Sigmoid colon (tissue), 7 donors: ENCODE measurements at regions of chr15 and their contacts with region 1.

Region 1: DNA sequence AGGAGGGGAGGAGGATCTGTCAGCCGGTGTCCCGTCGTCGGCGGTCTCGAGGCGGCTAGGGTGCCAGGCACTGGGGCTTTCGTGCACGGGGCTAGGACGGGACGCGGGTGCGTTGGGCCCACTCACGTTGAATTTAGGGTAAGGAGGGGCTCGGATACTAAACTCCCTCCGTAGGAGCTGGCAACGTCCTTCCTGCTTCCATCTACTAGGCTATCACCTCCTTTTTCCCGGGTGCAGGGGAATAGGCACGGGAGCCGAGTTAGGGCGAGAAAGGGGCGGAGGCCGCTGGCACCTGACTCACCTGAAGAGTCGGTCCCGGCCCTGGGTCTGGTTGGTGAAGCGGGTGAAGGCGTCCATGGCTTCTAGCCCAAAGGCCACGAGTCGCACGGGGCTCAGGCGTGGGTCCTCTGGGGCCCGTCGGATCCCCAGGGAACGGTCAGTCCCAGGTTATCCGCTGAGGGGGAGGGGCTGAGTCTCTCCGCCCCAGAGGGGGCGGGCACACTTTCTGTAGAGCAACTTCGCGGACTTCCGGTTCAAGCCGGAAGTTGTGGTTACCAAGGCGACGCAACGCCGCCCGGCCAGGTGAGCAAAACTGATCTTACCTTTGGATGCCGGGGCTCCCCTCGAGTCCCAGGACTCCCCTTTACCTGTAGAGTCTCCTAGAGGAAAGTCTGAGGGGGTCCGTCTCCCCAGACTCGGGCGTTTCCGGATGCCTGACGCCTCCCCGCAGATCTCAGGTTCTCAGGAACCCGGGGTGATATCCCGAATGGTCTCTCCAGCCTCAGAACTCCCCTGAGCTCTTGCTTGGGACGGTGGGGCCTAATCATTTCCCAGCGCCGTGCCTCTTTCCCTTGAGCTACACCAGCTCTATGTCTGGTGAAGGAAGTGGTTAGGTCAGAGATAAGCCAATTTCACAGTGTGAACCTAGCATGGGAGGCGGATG is at the starts of genes PEX11A and WDR93:
- DNase-seq: peak; percentile 89
- H3K4me3 ChIP-seq: peak within 1 kb of the TSS; percentile 72 to 91 (median 86)
- H3K27ac ChIP-seq: peak within 1 kb of the TSS; percentile 61 to 71 (median 68)
- H3K4me1 ChIP-seq: peaks cover 0 to 18% (median 10%) of the 10 kb centered on the region in 4 donors
- H3K27me3 ChIP-seq: no peaks in the 10 kb centered on the region
- CTCF ChIP-seq: no peak
- EP300 ChIP-seq: no peak
- POLR2A ChIP-seq: peak in 1 of 2 donors; percentile 64
- total RNA-seq, gene PEX11A: 11.1 to 16.5 (median 13.3) TPM
- total RNA-seq, gene WDR93: 1.1 TPM in 1 of 4 donors, not detected in the others

Region 2: DNA sequence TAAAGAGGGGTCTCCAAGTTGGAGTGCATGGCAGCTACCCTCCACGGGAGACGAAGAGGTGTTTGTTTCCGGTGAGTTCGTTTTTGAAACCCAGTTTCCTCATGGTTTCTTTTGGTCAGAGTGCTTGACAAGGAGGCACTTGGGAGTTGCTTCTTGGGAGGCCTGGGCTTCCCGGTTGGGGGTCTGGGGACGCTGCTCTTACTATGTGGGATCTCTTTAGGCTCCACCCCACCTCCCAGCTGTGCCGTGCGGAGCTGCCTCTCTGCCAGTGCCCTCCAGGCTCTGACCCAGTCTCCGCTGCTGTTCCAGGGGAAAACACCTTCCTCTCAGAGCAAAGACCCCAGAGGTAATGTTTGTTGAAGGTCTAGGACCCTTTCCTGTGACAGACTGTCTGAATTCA is 64.8 kb before region 1 on chr15:
- intact Hi-C with region 1: no loop called
- DNase-seq: no peak
- H3K4me3 ChIP-seq: no peak overlapping the region
- H3K27ac ChIP-seq: no peak overlapping the region
- H3K4me1 ChIP-seq: no peaks in the 10 kb centered on the region
- H3K27me3 ChIP-seq: no peaks in the 10 kb centered on the region
- CTCF ChIP-seq: no peak
- EP300 ChIP-seq: no peak
- POLR2A ChIP-seq: no peak

Region 3: GRCh38 chr15:89654847-89655805 is 35.4 kb before region 1 on chr15 and contains the start of gene KIF7:
- intact Hi-C with region 1: loop called (anchors 5 kb)
- DNase-seq: peak; percentile 71
- H3K4me3 ChIP-seq: peak within 1 kb of the TSS; percentile 63 to 92 (median 76)
- H3K27ac ChIP-seq: peak within 1 kb of the TSS; percentile 54 to 86 (median 76)
- H3K4me1 ChIP-seq: peaks cover 0 to 20% (median 14%) of the 10 kb centered on the region in 4 donors
- H3K27me3 ChIP-seq: no peaks in the 10 kb centered on the region
- CTCF ChIP-seq: no peak
- EP300 ChIP-seq: no peak
- POLR2A ChIP-seq: no peak
- total RNA-seq, gene KIF7: 5.4 to 15.2 (median 7.1) TPM